Breast epithelium (tissue), 4 donors: ENCODE measurements at regions of chr4 and their contacts with region 1.

Region 1: GRCh38 chr4:175106301-175106700 is 188.1 kb downstream of the ADAM29 start:
- DNase-seq: no peak
- H3K4me3 ChIP-seq: no peak overlapping the region
- H3K27ac ChIP-seq: no peak overlapping the region
- H3K4me1 ChIP-seq: no peaks in the 10 kb centered on the region
- H3K27me3 ChIP-seq: no peaks in the 10 kb centered on the region
- CTCF ChIP-seq: no peak
- POLR2A ChIP-seq: no peak

Region 2: DNA sequence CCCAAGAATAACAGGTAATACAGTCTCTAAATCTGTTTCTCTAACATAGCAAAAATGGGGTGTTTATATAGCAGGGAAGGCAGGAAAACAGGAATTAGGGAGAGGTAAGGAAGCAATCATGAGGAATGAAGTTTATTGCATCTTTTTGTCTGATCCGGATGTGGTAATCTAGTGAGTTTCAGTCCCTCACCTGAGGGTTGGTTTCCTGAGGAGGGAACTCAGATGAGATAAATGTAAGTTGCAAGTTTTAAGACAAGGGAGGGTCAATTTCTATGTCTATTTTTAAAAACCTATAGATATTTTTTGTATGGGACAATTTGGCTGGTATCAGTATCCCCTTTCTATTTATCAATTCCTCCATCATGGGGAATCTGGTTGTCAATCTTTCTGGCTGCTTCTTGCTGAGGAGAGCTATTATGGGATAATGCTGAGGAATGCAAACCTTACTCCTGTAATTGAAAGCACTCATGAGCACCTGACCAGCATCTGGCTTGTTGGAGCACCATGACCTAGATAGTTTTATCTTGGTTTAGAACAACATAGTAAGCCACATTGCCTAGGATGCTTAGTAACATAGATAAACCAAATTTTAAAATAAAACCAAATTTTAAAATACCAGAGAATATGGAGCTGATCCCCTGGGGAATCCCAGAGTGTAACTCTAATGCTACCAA is 58.1 kb before region 1 on chr4:
- intact Hi-C with region 1: loop called (anchors 2 kb)
- DNase-seq: no peak
- H3K4me3 ChIP-seq: no peak overlapping the region
- H3K27ac ChIP-seq: no peak overlapping the region
- H3K4me1 ChIP-seq: no peaks in the 10 kb centered on the region
- H3K27me3 ChIP-seq: no peaks in the 10 kb centered on the region
- CTCF ChIP-seq: no peak
- POLR2A ChIP-seq: no peak